ENCODE measurements at regions of chr22 and their contacts with region 1.

Region 1: DNA sequence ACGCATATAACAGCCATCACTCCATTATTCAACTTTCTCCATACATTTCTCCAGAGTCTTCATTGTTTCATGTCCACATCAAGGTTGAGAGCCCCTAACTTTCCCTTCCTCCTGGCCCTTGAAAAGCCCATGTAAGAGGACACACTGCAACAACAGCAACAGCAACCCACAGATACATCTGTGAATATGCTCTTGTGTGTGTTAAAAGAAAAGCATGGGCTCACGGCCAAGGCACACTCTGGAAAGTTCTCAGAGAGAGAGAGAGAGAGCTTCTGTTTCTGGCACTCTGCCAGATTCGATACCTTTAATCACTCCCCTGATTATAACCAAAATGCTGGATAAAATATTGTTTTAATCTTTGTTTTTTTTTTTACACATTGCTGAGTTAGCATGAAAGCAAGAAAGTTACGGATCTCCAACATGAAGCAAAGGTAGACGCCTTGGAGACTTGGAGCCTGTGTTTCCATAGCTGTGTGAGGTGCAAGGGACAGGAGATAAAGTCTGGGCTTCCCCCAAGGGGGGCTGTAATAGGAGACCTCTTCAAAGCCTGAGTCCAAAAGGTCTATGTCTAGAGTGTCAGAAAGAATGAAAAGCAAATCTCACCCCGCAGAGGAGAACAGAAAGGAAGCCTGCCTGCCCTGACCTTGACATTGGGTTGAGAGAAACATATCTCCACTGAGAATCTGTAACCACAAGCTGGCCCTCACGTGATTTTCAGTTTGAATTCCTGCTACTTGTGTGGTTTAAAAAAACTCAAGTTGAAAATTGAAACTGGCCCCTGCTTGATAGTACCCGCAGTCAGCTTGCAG is 33.7 kb upstream of the MPPED1 start:
- DNase-seq: no peak
- ATAC-seq: no peak

Region 2: GRCh38 chr22:43467216-43467940 is 89.3 kb after region 1 on chr22:
- intact Hi-C with region 1: no loop called
- DNase-seq: no peak
- ATAC-seq: no peak

Region 3: GRCh38 chr22:43711681-43712080 is 333.6 kb after region 1 on chr22:
- intact Hi-C with region 1: loop called (anchors 5 kb)
- DNase-seq: no peak
- ATAC-seq: no peak

Measured in left ventricle myocardium superior (tissue), 1 donor.